ENCODE measurements at regions of chr12 and their contacts with region 1.

Region 1: GRCh38 chr12:7142056-7142644 is 12.0 kb downstream of the CLSTN3 start:
- DNase-seq: no peak
- ATAC-seq: peak; percentile 93
- H3K4me3 ChIP-seq: no peak overlapping the region
- H3K27ac ChIP-seq: no peak overlapping the region
- H3K4me1 ChIP-seq: no peaks in the 10 kb centered on the region
- H3K27me3 ChIP-seq: no peaks in the 10 kb centered on the region
- CTCF ChIP-seq: peak; percentile 68 to 91 (median 86); a peak in 5 of 6 replicates
- POLR2A ChIP-seq: no peak
- RAD21 ChIP-seq: peak; percentile 59

Region 2: DNA sequence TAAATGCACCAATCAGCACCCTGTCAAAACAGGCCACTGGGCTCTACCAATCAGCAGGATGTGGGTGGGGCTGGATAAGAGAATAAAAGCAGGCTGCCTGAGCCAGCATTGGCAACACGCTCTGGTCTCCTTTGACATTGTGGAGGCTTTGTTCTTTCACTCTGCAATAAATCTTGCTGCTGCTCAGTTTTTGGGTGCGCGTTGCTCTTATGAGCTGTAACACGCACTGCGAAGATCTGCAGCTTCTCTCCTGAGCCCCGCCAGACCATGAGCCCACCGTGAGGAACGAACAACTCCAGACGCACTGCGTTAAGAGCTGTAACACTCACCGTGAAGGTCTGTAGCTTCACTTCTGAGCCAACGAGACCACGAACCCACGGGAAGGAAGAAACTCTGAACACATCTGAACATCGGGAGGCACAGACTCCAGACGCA is 433.2 kb before region 1 on chr12:
- CTCF ChIA-PET with region 1: no interaction called
- POLR2A ChIA-PET with region 1: no interaction called
- RAD21 ChIA-PET with region 1: no interaction called
- intact Hi-C with region 1: no loop called
- DNase-seq: no peak
- ATAC-seq: peak; percentile 36; the same call in 1 of the 2 replicates
- H3K4me3 ChIP-seq: no peak overlapping the region
- H3K27ac ChIP-seq: no peak overlapping the region
- H3K4me1 ChIP-seq: peaks cover 0 to 6% of the 10 kb centered on the region in 2 experiments; a peak in 2 of 4 replicates
- H3K27me3 ChIP-seq: no peaks in the 10 kb centered on the region
- CTCF ChIP-seq: no peak
- POLR2A ChIP-seq: peak; percentile 21
- RAD21 ChIP-seq: no peak

Region 3: GRCh38 chr12:7188562-7189397 is 46.6 kb after region 1 on chr12:
- CTCF ChIA-PET with region 1: interaction called, 4 read pairs
- POLR2A ChIA-PET with region 1: no interaction called
- RAD21 ChIA-PET with region 1: no interaction called
- intact Hi-C with region 1: loop called (anchors 1 kb)
- DNase-seq: peak; percentile 60
- ATAC-seq: peak; percentile 74
- H3K4me3 ChIP-seq: peak overlapping the region; percentile 83 to 86
- H3K27ac ChIP-seq: peak overlapping the region; percentile 30
- H3K4me1 ChIP-seq: peaks cover 7 to 24% of the 10 kb centered on the region in 2 experiments
- H3K27me3 ChIP-seq: no peaks in the 10 kb centered on the region
- CTCF ChIP-seq: peak; percentile 80 to 85 (median 82)
- POLR2A ChIP-seq: no peak
- RAD21 ChIP-seq: peak; percentile 88

Region 4: DNA sequence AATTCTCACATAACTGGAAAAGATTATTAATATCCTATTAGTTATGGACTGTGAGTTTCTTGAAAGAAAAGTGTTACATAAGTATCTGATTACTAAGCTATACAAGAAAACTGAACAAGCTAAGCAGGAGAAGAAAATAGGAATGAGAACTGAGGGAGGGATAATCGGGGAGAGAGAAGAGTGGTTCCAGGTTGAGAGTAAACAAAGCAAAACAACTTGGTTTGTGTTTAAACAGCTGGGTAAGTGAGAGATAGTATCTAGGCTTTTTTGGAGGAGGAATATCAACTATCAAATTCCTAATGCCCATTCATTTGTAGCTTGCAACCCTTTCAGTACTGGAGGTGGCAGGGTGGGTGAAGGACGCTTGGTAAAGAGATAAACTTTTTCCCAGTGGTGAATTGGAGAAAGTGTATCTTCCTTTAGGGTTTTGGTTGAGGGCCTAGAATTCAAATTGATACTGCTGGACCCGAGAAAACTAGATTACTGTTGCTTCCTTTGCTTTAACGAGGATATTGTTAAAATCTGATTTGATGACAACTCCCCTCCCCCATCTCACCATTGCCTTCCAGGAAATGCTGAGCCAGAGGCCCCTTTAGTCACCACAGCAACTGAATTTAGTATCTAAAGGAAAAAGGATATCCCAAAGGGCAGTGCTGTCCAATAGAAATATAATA is 795.8 kb after region 1 on chr12:
- CTCF ChIA-PET with region 1: no interaction called
- POLR2A ChIA-PET with region 1: no interaction called
- RAD21 ChIA-PET with region 1: no interaction called
- intact Hi-C with region 1: no loop called
- DNase-seq: no peak
- ATAC-seq: peak; percentile 35; the same call in 1 of the 2 replicates
- H3K4me3 ChIP-seq: no peak overlapping the region
- H3K27ac ChIP-seq: no peak overlapping the region
- H3K4me1 ChIP-seq: peaks cover 2 to 20% of the 10 kb centered on the region in 2 experiments; a peak in 3 of 4 replicates
- H3K27me3 ChIP-seq: no peaks in the 10 kb centered on the region
- CTCF ChIP-seq: peak in 2 of 3 experiments; percentile 43 to 53; a peak in 4 of 6 replicates
- POLR2A ChIP-seq: no peak
- RAD21 ChIP-seq: no peak

Measured in HCT116 (cell line).